MCF 10A (cell line): ENCODE measurements at regions of chr1 and their contacts with region 1.

Region 1: GRCh38 chr1:20696397-20697329 is 21.1 kb downstream of the KIF17 start:
- DNase-seq: peak; percentile 86
- H3K4me3 Mint-ChIP-seq: peak overlapping the region; percentile 82
- H3K27ac Mint-ChIP-seq: peak overlapping the region; percentile 76
- H3K4me1 Mint-ChIP-seq: peaks cover 11% of the 10 kb centered on the region
- H3K27me3 Mint-ChIP-seq: no peaks in the 10 kb centered on the region
- CTCF ChIP-seq: peak; percentile 94

Region 2: DNA sequence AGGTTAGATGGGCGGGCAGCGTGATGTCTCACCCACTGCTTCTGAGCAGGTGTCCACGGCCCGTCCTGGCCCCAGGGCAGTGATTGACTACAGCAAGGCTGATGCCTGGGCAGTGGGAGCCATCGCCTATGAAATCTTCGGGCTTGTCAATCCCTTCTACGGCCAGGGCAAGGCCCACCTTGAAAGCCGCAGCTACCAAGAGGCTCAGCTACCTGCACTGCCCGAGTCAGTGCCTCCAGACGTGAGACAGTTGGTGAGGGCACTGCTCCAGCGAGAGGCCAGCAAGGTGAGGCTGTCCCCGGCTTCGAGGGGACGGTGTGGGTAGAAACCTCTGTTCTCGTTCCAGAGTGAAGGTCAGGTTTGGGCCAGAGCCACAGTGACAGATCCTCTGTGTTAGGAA is 47.7 kb before region 1 on chr1:
- CTCF ChIA-PET with region 1: no interaction called
- POLR2A ChIA-PET with region 1: no interaction called
- intact Hi-C with region 1: no loop called
- DNase-seq: no peak
- H3K4me3 Mint-ChIP-seq: peak overlapping the region; percentile 14
- H3K27ac Mint-ChIP-seq: peak overlapping the region; percentile 43
- H3K4me1 Mint-ChIP-seq: no peaks in the 10 kb centered on the region
- H3K27me3 Mint-ChIP-seq: no peaks in the 10 kb centered on the region
- CTCF ChIP-seq: no peak

Region 3: DNA sequence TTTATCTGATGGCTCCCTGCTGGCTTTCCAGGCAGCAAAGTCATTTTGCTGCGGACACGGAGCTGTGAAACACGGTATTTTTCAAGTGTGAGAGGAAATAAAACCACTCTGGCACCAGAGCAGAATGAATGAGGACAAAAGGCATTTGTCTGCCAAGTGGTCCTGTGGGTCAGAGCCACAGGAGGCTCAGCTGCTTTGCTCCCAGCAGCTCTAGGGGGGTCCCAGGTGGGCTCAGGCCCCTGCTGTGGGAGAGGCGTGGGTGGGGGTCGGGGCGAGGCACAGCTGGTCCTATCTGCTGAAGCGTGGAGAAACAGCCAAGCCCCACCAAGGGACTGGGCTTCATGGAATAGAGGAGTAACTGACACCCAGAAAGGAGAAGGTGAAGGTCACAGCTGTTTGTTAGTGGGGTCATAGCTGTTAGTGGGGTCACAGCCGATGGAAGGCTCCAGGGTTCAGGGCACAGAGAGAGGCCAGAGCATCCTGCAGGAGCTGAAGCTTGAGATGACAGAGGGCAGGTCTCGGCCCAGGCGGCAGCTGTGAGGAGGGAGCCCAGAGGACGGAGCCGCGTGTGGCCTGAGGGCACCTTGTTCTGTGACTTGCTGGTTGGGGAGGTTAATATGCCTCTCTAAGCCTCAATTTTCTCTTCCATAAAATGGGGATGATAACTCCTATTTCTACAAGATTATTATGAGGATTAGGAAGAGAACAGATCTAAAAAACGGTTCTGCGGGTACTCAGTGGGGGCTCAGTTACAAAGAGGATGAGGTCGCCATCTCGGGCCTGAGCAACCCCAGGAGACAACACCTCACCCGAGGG is 14.0 kb after region 1 on chr1:
- CTCF ChIA-PET with region 1: interaction called, 39 read pairs
- POLR2A ChIA-PET with region 1: no interaction called
- intact Hi-C with region 1: no loop called
- DNase-seq: no peak
- H3K4me3 Mint-ChIP-seq: no peak overlapping the region
- H3K27ac Mint-ChIP-seq: no peak overlapping the region
- H3K4me1 Mint-ChIP-seq: no peaks in the 10 kb centered on the region
- H3K27me3 Mint-ChIP-seq: no peaks in the 10 kb centered on the region
- CTCF ChIP-seq: no peak

Region 4: GRCh38 chr1:20732588-20733360 is 36.1 kb after region 1 on chr1 and contains the start of gene SH2D5:
- CTCF ChIA-PET with region 1: interaction called, 8 read pairs
- POLR2A ChIA-PET with region 1: interaction called, 5 read pairs
- intact Hi-C with region 1: loop called (anchors 1 kb)
- DNase-seq: peak; percentile 97
- H3K4me3 Mint-ChIP-seq: peak within 1 kb of the TSS; percentile 85
- H3K27ac Mint-ChIP-seq: peak within 1 kb of the TSS; percentile 90
- H3K4me1 Mint-ChIP-seq: peaks cover 8% of the 10 kb centered on the region
- H3K27me3 Mint-ChIP-seq: no peaks in the 10 kb centered on the region
- CTCF ChIP-seq: no peak
- total RNA-seq, gene SH2D5: 14.0 and 14.6 TPM in 2 replicates

Region 5: DNA sequence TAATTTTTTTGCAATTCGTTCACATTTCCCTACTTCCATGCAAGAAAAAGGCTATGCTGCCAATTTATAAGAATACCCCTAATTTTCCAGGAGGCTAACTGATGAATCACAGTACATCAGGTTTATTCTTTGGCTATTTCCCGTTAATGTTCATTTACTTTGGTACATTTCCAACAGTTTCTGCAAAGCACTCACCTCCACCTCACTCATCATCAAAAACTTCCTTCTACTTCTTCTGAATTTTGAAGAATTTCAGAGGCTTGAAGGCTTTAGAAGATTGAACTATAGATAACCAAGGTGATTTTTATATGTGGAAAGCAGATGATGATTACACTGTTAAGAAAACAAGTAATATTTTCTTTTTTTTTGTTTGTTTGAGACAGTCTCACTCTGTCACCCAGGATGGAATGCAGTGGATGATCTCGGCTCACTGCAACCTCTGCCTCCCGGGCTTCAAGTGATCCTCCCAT is 151.0 kb after region 1 on chr1:
- CTCF ChIA-PET with region 1: interaction called, 3 read pairs
- POLR2A ChIA-PET with region 1: no interaction called
- intact Hi-C with region 1: loop called (anchors 10 kb)
- DNase-seq: peak; percentile 71
- H3K4me3 Mint-ChIP-seq: peak overlapping the region; percentile 2
- H3K27ac Mint-ChIP-seq: peak overlapping the region; percentile 10
- H3K4me1 Mint-ChIP-seq: peaks cover 18% of the 10 kb centered on the region
- H3K27me3 Mint-ChIP-seq: no peaks in the 10 kb centered on the region
- CTCF ChIP-seq: no peak

Region 6: GRCh38 chr1:20974069-20974468 is 277.4 kb after region 1 on chr1:
- CTCF ChIA-PET with region 1: no interaction called
- POLR2A ChIA-PET with region 1: no interaction called
- intact Hi-C with region 1: no loop called
- DNase-seq: no peak
- H3K4me3 Mint-ChIP-seq: no peak overlapping the region
- H3K27ac Mint-ChIP-seq: no peak overlapping the region
- H3K4me1 Mint-ChIP-seq: no peaks in the 10 kb centered on the region
- H3K27me3 Mint-ChIP-seq: no peaks in the 10 kb centered on the region
- CTCF ChIP-seq: no peak

Region 7: GRCh38 chr1:21189906-21190500 is 493.3 kb after region 1 on chr1:
- CTCF ChIA-PET with region 1: interaction called, 87 read pairs
- POLR2A ChIA-PET with region 1: interaction called, 7 read pairs
- intact Hi-C with region 1: loop called (anchors 1 kb)
- DNase-seq: peak; percentile 28
- H3K4me3 Mint-ChIP-seq: no peak overlapping the region
- H3K27ac Mint-ChIP-seq: no peak overlapping the region
- H3K4me1 Mint-ChIP-seq: peaks cover 14% of the 10 kb centered on the region
- H3K27me3 Mint-ChIP-seq: no peaks in the 10 kb centered on the region
- CTCF ChIP-seq: no peak